ENCODE measurements at regions of chr18 and their contacts with region 1.

Region 1: DNA sequence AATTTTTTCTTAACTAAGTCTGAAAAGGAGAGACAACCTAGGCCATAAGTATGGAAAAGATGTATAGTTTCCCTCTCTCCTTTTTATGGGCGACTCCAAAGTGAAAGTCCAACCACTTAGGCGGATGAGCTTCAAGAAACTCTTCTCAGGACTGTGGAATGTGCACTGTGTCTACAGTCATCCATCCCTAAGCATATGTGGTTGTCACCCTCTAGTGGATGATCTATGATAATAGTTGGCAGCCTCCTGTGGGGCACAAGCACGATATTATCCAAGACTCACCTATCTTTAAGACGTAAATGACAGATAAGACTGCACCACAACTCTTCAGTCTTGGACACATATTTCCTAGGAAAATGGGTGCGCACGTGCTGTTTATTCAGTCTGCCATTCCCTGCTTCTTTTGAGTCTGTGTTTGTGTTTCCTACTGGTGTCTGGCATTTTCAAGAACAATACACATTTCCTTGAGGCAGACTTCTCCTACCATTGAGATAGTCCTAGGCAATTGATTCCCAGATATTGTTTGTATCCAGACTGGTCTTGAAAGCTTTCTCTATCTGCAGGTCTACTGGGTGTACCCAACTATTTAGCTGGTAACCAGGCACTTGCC is 145.5 kb upstream of the CTAGE1 start:
- DNase-seq: no peak
- ATAC-seq: peak; percentile 71 to 81 (median 75)
- H3K4me3 ChIP-seq: no peak overlapping the region
- H3K27ac ChIP-seq: no peak overlapping the region
- H3K4me1 ChIP-seq: no peaks in the 10 kb centered on the region
- H3K27me3 ChIP-seq: peaks cover 0 to 64% (median 0%) of the 10 kb centered on the region in 3 donors
- CTCF ChIP-seq: peak; percentile 62

Region 2: GRCh38 chr18:21897811-21898210 is 665.4 kb before region 1 on chr18:
- intact Hi-C with region 1: loop called in 1 of 2 experiments (anchors 5 kb)
- DNase-seq: no peak
- ATAC-seq: peak in 1 of 4 donors; percentile 45
- H3K4me3 ChIP-seq: no peak overlapping the region
- H3K27ac ChIP-seq: no peak overlapping the region
- H3K4me1 ChIP-seq: no peaks in the 10 kb centered on the region
- H3K27me3 ChIP-seq: peaks cover 0 to 3% (median 0%) of the 10 kb centered on the region in 3 donors
- CTCF ChIP-seq: peak; percentile 50

Region 3: DNA sequence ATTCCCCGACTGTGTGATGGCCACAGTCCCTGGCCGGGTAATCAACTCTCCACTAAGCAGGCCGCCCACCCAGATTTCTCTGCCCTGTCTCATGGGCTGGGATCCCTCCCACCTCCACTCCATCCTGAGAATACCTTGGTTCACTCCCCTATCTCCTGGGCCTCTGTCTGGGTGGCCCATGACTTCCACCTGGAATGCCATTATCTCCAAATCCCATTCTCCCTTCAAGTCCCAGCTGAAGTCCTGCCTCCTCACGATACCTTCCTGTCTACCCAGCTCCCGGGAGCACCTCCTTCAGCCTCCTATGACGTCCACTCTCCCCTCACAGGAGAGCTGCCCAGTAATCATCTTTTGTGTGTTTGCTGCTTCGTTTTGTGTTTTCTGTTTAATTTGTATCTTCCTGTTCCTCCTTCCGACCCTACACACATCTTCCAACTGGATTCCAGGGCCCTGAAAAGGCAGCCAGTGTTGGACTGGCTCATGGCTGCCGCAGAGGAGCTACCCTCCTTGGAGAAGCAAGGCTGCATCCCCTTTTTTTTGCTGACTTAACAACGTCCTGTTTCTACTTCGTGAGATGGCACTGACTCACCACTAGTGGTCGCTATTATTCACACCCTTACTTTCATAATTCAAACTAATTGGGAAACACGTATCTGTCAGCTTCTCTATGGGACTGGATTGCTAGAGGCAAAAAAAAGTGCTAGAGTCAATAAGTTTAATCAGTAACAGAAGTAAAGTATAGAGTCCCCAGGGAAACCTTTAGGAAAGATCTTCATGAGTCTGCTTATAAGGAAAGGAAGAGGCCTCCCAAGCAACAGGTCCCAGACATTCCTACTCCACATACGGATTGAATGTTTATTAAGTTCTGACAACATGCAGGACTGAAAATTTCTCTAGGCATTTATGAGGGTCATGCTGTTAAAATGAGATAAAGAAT is 565.7 kb before region 1 on chr18:
- intact Hi-C with region 1: loop called in 1 of 2 experiments (anchors 10 kb)
- DNase-seq: no peak
- ATAC-seq: no peak
- H3K4me3 ChIP-seq: no peak overlapping the region
- H3K27ac ChIP-seq: no peak overlapping the region
- H3K4me1 ChIP-seq: no peaks in the 10 kb centered on the region
- H3K27me3 ChIP-seq: no peaks in the 10 kb centered on the region
- CTCF ChIP-seq: peak; percentile 52

Region 4: GRCh38 chr18:22169007-22169864 is 394.0 kb before region 1 on chr18 and contains the start of gene GATA6:
- intact Hi-C with region 1: loop called (anchors 2 to 10 kb)
- DNase-seq: peak; percentile 70 to 75
- ATAC-seq: peak; percentile 56 to 69 (median 64)
- H3K4me3 ChIP-seq: peak within 1 kb of the TSS; percentile 85
- H3K27ac ChIP-seq: peak within 1 kb of the TSS; percentile 61
- H3K4me1 ChIP-seq: peaks cover 10% of the 10 kb centered on the region
- H3K27me3 ChIP-seq: peaks cover 4 to 95% (median 71%) of the 10 kb centered on the region in 3 donors
- CTCF ChIP-seq: peak; percentile 31
- total RNA-seq, gene GATA6: 0.53 to 0.92 (median 0.81) TPM

Region 5: DNA sequence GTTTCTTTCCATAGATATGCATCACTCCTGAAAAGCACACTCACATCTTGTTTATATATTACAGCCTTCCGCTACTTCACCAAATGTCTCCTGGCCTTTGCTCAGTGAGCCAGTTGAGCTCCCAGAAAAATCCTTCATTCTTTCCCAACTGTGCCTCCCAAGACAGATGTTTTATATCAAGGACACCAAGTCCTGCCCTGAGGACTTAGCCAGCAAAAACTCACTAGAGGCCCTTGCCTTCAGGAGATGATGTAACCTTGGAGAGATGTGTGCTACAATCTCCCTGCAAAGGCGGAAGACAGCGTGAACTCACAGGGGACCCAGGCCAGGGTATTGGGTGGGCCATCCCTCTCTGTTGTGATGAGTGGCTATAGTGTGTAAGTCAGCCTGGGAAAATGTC is 59.4 kb before region 1 on chr18:
- intact Hi-C with region 1: no loop called
- DNase-seq: peak; percentile 27 to 53
- ATAC-seq: peak in 1 of 4 donors; percentile 40
- H3K4me3 ChIP-seq: no peak overlapping the region
- H3K27ac ChIP-seq: no peak overlapping the region
- H3K4me1 ChIP-seq: no peaks in the 10 kb centered on the region
- H3K27me3 ChIP-seq: no peaks in the 10 kb centered on the region
- CTCF ChIP-seq: no peak

Region 6: DNA sequence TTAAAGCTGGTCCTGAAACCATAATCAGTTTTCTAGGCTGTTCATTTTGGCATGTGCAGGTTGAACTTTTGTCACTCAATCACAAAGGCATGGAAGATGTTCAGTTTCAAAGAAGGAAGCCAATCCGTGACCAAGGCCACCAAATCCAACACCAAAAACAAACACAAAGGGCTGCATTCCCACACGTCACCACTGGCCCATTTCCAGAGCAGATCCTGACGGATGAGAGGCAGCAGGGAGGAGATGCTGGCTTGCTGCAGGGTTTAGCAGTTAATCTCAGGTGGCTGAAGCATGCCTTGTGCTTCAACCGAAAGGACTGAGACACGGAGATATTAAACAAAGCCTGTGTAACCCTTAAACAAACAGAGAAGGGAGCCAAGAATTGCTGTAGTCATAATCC is 46.4 kb after region 1 on chr18:
- intact Hi-C with region 1: no loop called
- DNase-seq: peak in 1 of 2 donors; percentile 25
- ATAC-seq: no peak
- H3K4me3 ChIP-seq: no peak overlapping the region
- H3K27ac ChIP-seq: peak overlapping the region; percentile 31
- H3K4me1 ChIP-seq: no peaks in the 10 kb centered on the region
- H3K27me3 ChIP-seq: no peaks in the 10 kb centered on the region
- CTCF ChIP-seq: no peak

Region 7: GRCh38 chr18:22694954-22695353 is 131.8 kb after region 1 on chr18:
- intact Hi-C with region 1: no loop called
- DNase-seq: peak; percentile 58 to 69
- ATAC-seq: peak in 2 of 4 donors; percentile 44 to 53
- H3K4me3 ChIP-seq: no peak overlapping the region
- H3K27ac ChIP-seq: no peak overlapping the region
- H3K4me1 ChIP-seq: no peaks in the 10 kb centered on the region
- H3K27me3 ChIP-seq: peaks cover 0 to 3% (median 0%) of the 10 kb centered on the region in 3 donors
- CTCF ChIP-seq: no peak